CD8-positive, alpha-beta T cell (primary cell): ENCODE measurements at regions of chr15 and their contacts with region 1.

Region 1: GRCh38 chr15:80058851-80059785 is at the start of gene ZFAND6:
- DNase-seq: peak; percentile 91 to 97 (median 95)
- ATAC-seq: peak; percentile 89
- H3K4me3 ChIP-seq: peak within 1 kb of the TSS; percentile 77 to 95
- H3K4me3 Mint-ChIP-seq: peak within 1 kb of the TSS; percentile 91
- H3K27ac ChIP-seq: peak within 1 kb of the TSS; percentile 84 to 86
- H3K27ac Mint-ChIP-seq: peak within 1 kb of the TSS; percentile 93
- H3K4me1 ChIP-seq: peaks cover 23% of the 10 kb centered on the region
- H3K4me1 Mint-ChIP-seq: peaks cover 42% of the 10 kb centered on the region
- H3K27me3 ChIP-seq: no peaks in the 10 kb centered on the region
- H3K27me3 Mint-ChIP-seq: no peaks in the 10 kb centered on the region
- CTCF ChIP-seq: no peak
- total RNA-seq, gene ZFAND6: 60.1 to 69.8 TPM

Region 2: GRCh38 chr15:79310983-79311900 is 747.9 kb before region 1 on chr15 and contains the start of gene TMED3:
- CTCF ChIA-PET with region 1: no interaction called
- POLR2A ChIA-PET with region 1: no interaction called
- intact Hi-C with region 1: loop called in 1 of 2 experiments (anchors 2 kb)
- DNase-seq: peak; percentile 56 to 92 (median 75)
- ATAC-seq: peak; percentile 95
- H3K4me3 ChIP-seq: peak within 1 kb of the TSS; percentile 83 to 88
- H3K4me3 Mint-ChIP-seq: peak within 1 kb of the TSS; percentile 89
- H3K27ac ChIP-seq: peak within 1 kb of the TSS in 1 of 2 experiments; percentile 47
- H3K27ac Mint-ChIP-seq: peak within 1 kb of the TSS; percentile 22
- H3K4me1 ChIP-seq: peaks cover 19% of the 10 kb centered on the region
- H3K4me1 Mint-ChIP-seq: peaks cover 49% of the 10 kb centered on the region
- H3K27me3 ChIP-seq: no peaks in the 10 kb centered on the region
- H3K27me3 Mint-ChIP-seq: no peaks in the 10 kb centered on the region
- CTCF ChIP-seq: no peak
- total RNA-seq, gene TMED3: 14.2 to 16.0 TPM

Region 3: GRCh38 chr15:79923515-79924395 is 135.4 kb before region 1 on chr15:
- CTCF ChIA-PET with region 1: no interaction called
- POLR2A ChIA-PET with region 1: interaction called, 13 read pairs
- intact Hi-C with region 1: loop called (anchors 1 kb)
- DNase-seq: peak; percentile 95 to 100 (median 99)
- ATAC-seq: peak; percentile 93
- H3K4me3 ChIP-seq: peak overlapping the region; percentile 76 to 85
- H3K4me3 Mint-ChIP-seq: peak overlapping the region; percentile 91
- H3K27ac ChIP-seq: peak overlapping the region; percentile 90 to 94
- H3K27ac Mint-ChIP-seq: peak overlapping the region; percentile 93
- H3K4me1 ChIP-seq: peaks cover 11% of the 10 kb centered on the region
- H3K4me1 Mint-ChIP-seq: peaks cover 15% of the 10 kb centered on the region
- H3K27me3 ChIP-seq: no peaks in the 10 kb centered on the region
- H3K27me3 Mint-ChIP-seq: no peaks in the 10 kb centered on the region
- CTCF ChIP-seq: no peak

Region 4: GRCh38 chr15:80072285-80072994 is 13.3 kb after region 1 on chr15:
- CTCF ChIA-PET with region 1: interaction called, 9 read pairs
- POLR2A ChIA-PET with region 1: interaction called, 36 read pairs
- intact Hi-C with region 1: loop called (anchors 1 kb)
- DNase-seq: peak in 3 of 9 experiments; percentile 29 to 75 (median 58)
- ATAC-seq: peak; percentile 98
- H3K4me3 ChIP-seq: peak overlapping the region; percentile 25 to 32
- H3K4me3 Mint-ChIP-seq: peak overlapping the region; percentile 83
- H3K27ac ChIP-seq: peak overlapping the region in 1 of 2 experiments; percentile 41
- H3K27ac Mint-ChIP-seq: peak overlapping the region; percentile 71
- H3K4me1 ChIP-seq: peaks cover 31% of the 10 kb centered on the region
- H3K4me1 Mint-ChIP-seq: peaks cover 81% of the 10 kb centered on the region
- H3K27me3 ChIP-seq: no peaks in the 10 kb centered on the region
- H3K27me3 Mint-ChIP-seq: no peaks in the 10 kb centered on the region
- CTCF ChIP-seq: no peak

Region 5: GRCh38 chr15:80152180-80152845 is 93.2 kb after region 1 on chr15:
- CTCF ChIA-PET with region 1: interaction called, 5 read pairs
- POLR2A ChIA-PET with region 1: interaction called, 12 read pairs
- intact Hi-C with region 1: loop called (anchors 1 kb)
- DNase-seq: peak; percentile 74 to 92 (median 86)
- ATAC-seq: peak; percentile 76
- H3K4me3 ChIP-seq: peak overlapping the region; percentile 54 to 68
- H3K4me3 Mint-ChIP-seq: peak overlapping the region; percentile 87
- H3K27ac ChIP-seq: peak overlapping the region in 1 of 2 experiments; percentile 61
- H3K27ac Mint-ChIP-seq: peak overlapping the region; percentile 75
- H3K4me1 ChIP-seq: peaks cover 14% of the 10 kb centered on the region
- H3K4me1 Mint-ChIP-seq: peaks cover 20% of the 10 kb centered on the region
- H3K27me3 ChIP-seq: no peaks in the 10 kb centered on the region
- H3K27me3 Mint-ChIP-seq: no peaks in the 10 kb centered on the region
- CTCF ChIP-seq: no peak

Region 6: DNA sequence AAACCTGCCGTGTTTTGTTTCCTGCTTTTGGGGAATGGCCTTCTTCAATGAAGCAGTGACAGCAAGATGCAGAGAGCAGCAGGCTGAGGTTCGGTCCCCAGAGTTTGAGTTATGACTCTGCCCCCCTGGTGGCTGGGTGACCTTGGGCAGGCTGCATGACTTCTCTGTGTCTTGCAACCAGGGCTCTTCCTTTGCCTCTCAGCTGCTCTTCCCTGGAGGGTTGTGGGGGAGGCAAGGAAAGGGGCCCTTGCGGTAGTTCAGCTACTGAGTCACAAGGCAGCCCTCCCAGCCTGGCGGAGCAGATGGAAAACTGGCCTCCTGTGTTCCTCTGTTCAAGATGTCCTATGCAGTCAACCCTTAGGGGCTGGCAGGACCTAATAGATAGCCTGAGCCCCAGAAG is 175.8 kb after region 1 on chr15:
- CTCF ChIA-PET with region 1: no interaction called
- POLR2A ChIA-PET with region 1: no interaction called
- intact Hi-C with region 1: loop called in 1 of 2 experiments (anchors 2 kb)
- DNase-seq: peak in 8 of 9 experiments; percentile 11 to 57 (median 30)
- ATAC-seq: no peak
- H3K4me3 ChIP-seq: no peak overlapping the region
- H3K4me3 Mint-ChIP-seq: no peak overlapping the region
- H3K27ac ChIP-seq: no peak overlapping the region
- H3K27ac Mint-ChIP-seq: no peak overlapping the region
- H3K4me1 ChIP-seq: no peaks in the 10 kb centered on the region
- H3K4me1 Mint-ChIP-seq: no peaks in the 10 kb centered on the region
- H3K27me3 ChIP-seq: no peaks in the 10 kb centered on the region
- H3K27me3 Mint-ChIP-seq: peaks cover 35% of the 10 kb centered on the region
- CTCF ChIP-seq: no peak

Region 7: DNA sequence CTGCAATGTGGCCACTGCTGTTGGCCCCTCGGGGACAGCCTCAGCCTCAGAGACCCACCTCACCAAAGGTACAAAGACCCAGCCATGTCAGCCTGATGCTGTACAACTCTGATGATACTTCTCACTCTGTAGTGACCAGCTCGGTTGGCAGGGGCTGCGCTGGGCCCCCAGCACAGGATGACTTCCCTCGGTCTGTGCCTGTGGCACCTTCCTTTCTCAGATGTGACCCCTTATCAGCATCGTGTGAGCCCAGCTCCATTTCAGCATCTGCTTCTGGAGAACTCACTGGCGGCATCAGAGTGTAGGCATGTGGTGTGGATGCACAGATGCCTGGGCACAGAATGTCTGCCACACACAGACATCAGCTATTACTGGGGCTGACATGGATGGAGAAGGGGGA is 218.0 kb after region 1 on chr15:
- CTCF ChIA-PET with region 1: no interaction called
- POLR2A ChIA-PET with region 1: no interaction called
- intact Hi-C with region 1: no loop called
- DNase-seq: no peak
- ATAC-seq: no peak
- H3K4me3 ChIP-seq: no peak overlapping the region
- H3K4me3 Mint-ChIP-seq: no peak overlapping the region
- H3K27ac ChIP-seq: no peak overlapping the region
- H3K27ac Mint-ChIP-seq: no peak overlapping the region
- H3K4me1 ChIP-seq: no peaks in the 10 kb centered on the region
- H3K4me1 Mint-ChIP-seq: no peaks in the 10 kb centered on the region
- H3K27me3 ChIP-seq: no peaks in the 10 kb centered on the region
- H3K27me3 Mint-ChIP-seq: peaks cover 8% of the 10 kb centered on the region
- CTCF ChIP-seq: no peak

Region 8: GRCh38 chr15:80989518-80990478 is 930.7 kb after region 1 on chr15 and contains the start of gene MESD:
- CTCF ChIA-PET with region 1: no interaction called
- POLR2A ChIA-PET with region 1: no interaction called
- intact Hi-C with region 1: loop called (anchors 5 kb)
- DNase-seq: peak; percentile 91 to 99 (median 98)
- ATAC-seq: peak; percentile 100
- H3K4me3 ChIP-seq: peak within 1 kb of the TSS; percentile 70 to 96
- H3K4me3 Mint-ChIP-seq: peak within 1 kb of the TSS; percentile 100
- H3K27ac ChIP-seq: peak within 1 kb of the TSS; percentile 76 to 95
- H3K27ac Mint-ChIP-seq: peak within 1 kb of the TSS; percentile 99
- H3K4me1 ChIP-seq: peaks cover 50% of the 10 kb centered on the region
- H3K4me1 Mint-ChIP-seq: peaks cover 62% of the 10 kb centered on the region
- H3K27me3 ChIP-seq: no peaks in the 10 kb centered on the region
- H3K27me3 Mint-ChIP-seq: no peaks in the 10 kb centered on the region
- CTCF ChIP-seq: no peak
- total RNA-seq, gene MESD: 6.4 to 8.1 TPM